Activated CD8-positive, alpha-beta T cell treated with anti-CD3 and anti-CD28 coated beads, Interleukin-2, amount 10 ng/mL, durations not matched to agents 7 days and 5 days (primary cell): ENCODE measurements at regions of chr18 and their contacts with region 1.

Region 1: GRCh38 chr18:35029770-35030169 is 11.4 kb upstream of the MAPRE2 start:
- DNase-seq: no peak
- ATAC-seq: peak; percentile 77
- H3K4me3 Mint-ChIP-seq: peak overlapping the region; percentile 77
- H3K27ac Mint-ChIP-seq: peak overlapping the region; percentile 99
- H3K4me1 Mint-ChIP-seq: peaks cover 42% of the 10 kb centered on the region
- H3K27me3 Mint-ChIP-seq: no peaks in the 10 kb centered on the region

Region 2: GRCh38 chr18:34624551-34624950 is 405.2 kb before region 1 on chr18:
- CTCF ChIA-PET with region 1: no interaction called
- POLR2A ChIA-PET with region 1: no interaction called
- DNase-seq: no peak
- ATAC-seq: no peak
- H3K4me3 Mint-ChIP-seq: no peak overlapping the region
- H3K27ac Mint-ChIP-seq: no peak overlapping the region
- H3K4me1 Mint-ChIP-seq: no peaks in the 10 kb centered on the region
- H3K27me3 Mint-ChIP-seq: no peaks in the 10 kb centered on the region

Region 3: DNA sequence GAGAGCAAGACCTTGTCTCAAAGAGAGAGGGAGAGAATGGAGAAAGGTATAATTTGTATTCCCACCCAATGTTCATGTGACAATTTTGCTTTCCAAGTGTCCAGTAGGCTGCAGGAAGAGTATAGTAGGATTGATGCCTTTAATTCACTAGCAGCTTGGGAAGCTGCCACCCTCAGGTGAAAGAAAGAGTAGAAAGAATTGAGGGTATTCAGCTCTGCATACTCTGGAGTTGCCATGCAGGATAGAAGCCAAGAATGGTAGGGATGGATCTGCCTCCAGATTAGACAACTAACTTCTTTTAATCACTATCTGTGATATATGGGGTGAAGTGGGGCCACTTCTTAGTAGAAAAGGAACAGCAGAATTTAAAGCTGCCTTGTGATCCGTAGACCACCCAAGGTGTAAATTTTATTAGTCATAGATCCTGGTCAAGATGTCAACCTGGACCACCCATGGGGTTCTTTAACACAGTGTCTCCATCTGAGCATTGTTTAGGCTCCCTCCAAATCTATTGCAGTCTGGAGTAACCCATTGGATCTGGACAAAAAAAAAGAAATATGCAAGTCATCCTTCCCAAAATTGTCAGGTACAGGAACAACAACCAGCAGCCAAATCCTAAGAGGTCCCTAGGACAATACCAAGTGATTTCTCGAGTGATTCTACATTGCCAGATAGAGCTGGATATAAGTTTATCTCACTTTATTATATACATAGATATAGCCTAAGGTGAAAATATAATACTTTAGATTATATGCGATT is 352.8 kb before region 1 on chr18:
- CTCF ChIA-PET with region 1: no interaction called
- POLR2A ChIA-PET with region 1: no interaction called
- DNase-seq: no peak
- ATAC-seq: no peak
- H3K4me3 Mint-ChIP-seq: no peak overlapping the region
- H3K27ac Mint-ChIP-seq: no peak overlapping the region
- H3K4me1 Mint-ChIP-seq: no peaks in the 10 kb centered on the region
- H3K27me3 Mint-ChIP-seq: no peaks in the 10 kb centered on the region

Region 4: GRCh38 chr18:35005963-35006577 is 23.7 kb before region 1 on chr18:
- CTCF ChIA-PET with region 1: interaction called, 19 read pairs
- POLR2A ChIA-PET with region 1: no interaction called
- DNase-seq: peak; percentile 35
- ATAC-seq: peak; percentile 85
- H3K4me3 Mint-ChIP-seq: no peak overlapping the region
- H3K27ac Mint-ChIP-seq: no peak overlapping the region
- H3K4me1 Mint-ChIP-seq: no peaks in the 10 kb centered on the region
- H3K27me3 Mint-ChIP-seq: no peaks in the 10 kb centered on the region

Region 5: DNA sequence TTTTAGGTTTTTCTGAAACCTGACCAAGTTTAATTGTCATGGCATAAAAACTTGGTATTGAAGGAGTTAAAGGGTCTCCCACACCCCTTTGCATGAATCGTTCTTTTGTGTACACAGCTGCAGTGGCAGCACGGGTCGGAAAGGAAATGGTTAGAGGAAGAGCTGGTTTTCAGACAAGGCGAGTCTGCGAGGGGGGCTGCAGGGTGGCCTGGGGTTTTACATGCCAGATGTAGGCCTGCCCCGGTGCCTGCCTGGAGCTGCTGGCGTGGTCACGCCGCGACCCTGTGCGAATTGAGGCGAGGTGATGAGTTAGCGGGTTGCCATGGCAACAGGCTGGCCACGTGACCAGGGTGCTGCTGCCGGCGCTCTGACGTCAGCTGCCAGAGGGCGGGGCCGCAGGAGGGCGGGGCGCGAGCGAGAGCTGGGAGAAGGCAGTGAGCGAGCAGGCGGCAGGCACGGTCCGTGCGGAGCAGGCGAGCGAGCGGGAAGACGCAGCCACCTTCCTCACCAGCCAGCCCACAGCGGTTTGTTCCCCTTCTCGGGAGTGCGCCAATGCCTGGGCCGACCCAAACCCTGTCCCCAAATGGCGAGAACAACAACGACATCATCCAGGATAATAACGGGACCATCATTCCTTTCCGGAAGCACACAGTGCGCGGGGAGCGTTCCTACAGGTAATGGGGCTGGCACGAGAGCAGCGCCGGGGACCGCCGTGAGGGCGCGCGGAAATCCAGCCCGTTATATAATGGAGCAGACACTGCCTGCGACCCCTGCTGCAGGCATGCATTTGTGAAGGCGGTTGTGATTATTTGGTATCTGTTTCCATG is 11.4 kb after region 1 on chr18 and contains the start of gene MAPRE2:
- CTCF ChIA-PET with region 1: interaction called, 160 read pairs
- POLR2A ChIA-PET with region 1: interaction called, 117 read pairs
- DNase-seq: peak; percentile 99
- ATAC-seq: peak; percentile 90
- H3K4me3 Mint-ChIP-seq: peak within 1 kb of the TSS; percentile 94
- H3K27ac Mint-ChIP-seq: peak within 1 kb of the TSS; percentile 97
- H3K4me1 Mint-ChIP-seq: peaks cover 63% of the 10 kb centered on the region
- H3K27me3 Mint-ChIP-seq: no peaks in the 10 kb centered on the region
- total RNA-seq, gene MAPRE2: 49.0 to 53.6 TPM

Region 6: GRCh38 chr18:35050028-35050546 is 20.3 kb after region 1 on chr18:
- CTCF ChIA-PET with region 1: interaction called, 38 read pairs
- POLR2A ChIA-PET with region 1: interaction called, 28 read pairs
- DNase-seq: no peak
- ATAC-seq: peak; percentile 54
- H3K4me3 Mint-ChIP-seq: peak overlapping the region; percentile 67
- H3K27ac Mint-ChIP-seq: peak overlapping the region; percentile 91
- H3K4me1 Mint-ChIP-seq: peaks cover 65% of the 10 kb centered on the region
- H3K27me3 Mint-ChIP-seq: no peaks in the 10 kb centered on the region

Region 7: DNA sequence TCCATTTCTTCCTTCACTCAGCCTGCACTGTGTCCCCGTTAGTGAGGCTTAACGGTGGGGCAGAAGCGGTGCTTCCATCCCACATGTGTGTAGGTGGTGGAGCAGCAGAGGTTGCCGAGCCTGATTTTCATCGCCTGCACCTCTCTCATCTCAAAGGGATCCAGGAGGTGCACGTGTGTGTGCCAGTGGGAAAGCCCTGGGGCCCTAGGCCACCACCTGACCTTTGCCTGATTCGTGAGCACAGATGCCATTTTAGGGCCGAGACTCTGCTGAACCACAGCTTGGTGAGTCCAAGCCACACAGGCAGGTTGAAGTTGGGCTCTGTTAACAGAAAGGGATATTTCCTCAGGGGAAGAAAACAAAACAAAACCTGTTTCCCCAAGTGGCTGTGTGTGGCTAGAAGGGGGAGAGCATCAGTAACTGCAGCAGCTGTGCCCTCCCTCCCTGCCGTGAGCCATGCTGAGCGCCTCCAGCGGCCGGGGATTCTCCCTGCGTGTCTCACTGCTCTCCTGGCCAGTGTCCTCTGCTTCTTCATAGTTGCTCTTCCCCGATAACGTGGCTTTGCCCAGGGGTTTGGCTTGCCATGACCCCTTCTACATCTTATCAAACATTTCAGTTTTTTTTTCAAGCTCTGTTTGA is 92.9 kb after region 1 on chr18:
- CTCF ChIA-PET with region 1: interaction called, 16 read pairs
- POLR2A ChIA-PET with region 1: no interaction called
- DNase-seq: peak; percentile 48
- ATAC-seq: peak; percentile 82
- H3K4me3 Mint-ChIP-seq: no peak overlapping the region
- H3K27ac Mint-ChIP-seq: peak overlapping the region; percentile 27
- H3K4me1 Mint-ChIP-seq: peaks cover 22% of the 10 kb centered on the region
- H3K27me3 Mint-ChIP-seq: no peaks in the 10 kb centered on the region

Region 8: GRCh38 chr18:35143622-35144596 is 114.1 kb after region 1 on chr18:
- CTCF ChIA-PET with region 1: interaction called, 65 read pairs
- POLR2A ChIA-PET with region 1: interaction called, 4 read pairs
- DNase-seq: peak; percentile 42
- ATAC-seq: peak; percentile 58
- H3K4me3 Mint-ChIP-seq: no peak overlapping the region
- H3K27ac Mint-ChIP-seq: no peak overlapping the region
- H3K4me1 Mint-ChIP-seq: peaks cover 6% of the 10 kb centered on the region
- H3K27me3 Mint-ChIP-seq: no peaks in the 10 kb centered on the region

Region 9: DNA sequence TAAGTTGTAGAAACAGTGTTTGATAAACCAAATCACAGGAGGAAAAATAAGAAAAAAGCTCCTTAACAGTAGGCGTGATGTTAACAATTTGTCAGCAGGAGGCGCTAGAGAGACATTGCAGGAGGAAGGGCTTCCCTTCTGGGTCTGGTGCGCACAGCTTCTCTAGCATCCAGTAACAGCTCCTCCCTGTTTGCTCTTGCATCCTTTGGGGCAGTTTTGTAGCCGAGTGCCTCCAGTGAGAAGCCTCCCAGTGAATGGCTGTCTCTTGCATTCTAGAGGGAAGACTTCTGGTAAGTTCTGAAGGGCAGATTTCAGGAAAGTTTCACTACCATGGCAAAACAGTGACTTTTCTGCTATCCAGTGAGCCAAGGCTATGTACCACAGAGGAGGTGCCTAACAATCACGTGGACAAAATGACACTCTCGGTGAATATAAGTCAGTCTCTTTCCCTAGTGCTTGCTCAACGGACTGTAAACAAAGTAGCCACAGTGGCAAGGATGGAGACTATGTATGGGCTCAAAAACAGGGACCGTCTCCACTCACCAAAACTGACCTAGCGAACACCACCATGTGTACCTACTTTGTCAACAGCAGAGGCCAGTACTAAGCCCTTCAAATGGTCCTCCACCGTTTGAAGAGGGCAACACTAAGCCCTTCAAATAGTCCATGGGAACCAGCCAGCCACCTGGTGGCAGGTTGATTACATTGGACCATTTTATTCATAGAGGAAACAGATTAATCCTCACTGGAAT is 357.0 kb after region 1 on chr18:
- CTCF ChIA-PET with region 1: interaction called, 17 read pairs
- POLR2A ChIA-PET with region 1: no interaction called
- DNase-seq: peak; percentile 78
- ATAC-seq: peak; percentile 94
- H3K4me3 Mint-ChIP-seq: no peak overlapping the region
- H3K27ac Mint-ChIP-seq: no peak overlapping the region
- H3K4me1 Mint-ChIP-seq: peaks cover 5% of the 10 kb centered on the region
- H3K27me3 Mint-ChIP-seq: peaks cover 29% of the 10 kb centered on the region